Naive thymus-derived CD4-positive, alpha-beta T cell (primary cell): ENCODE measurements at regions of chr3 and their contacts with region 1.

Region 1: GRCh38 chr3:56702490-56703315 is 19.6 kb upstream of the TASOR start:
- DNase-seq: peak in 7 of 9 donors; percentile 52 to 75 (median 67)
- ATAC-seq: peak; percentile 86
- H3K4me3 ChIP-seq: no peak overlapping the region
- H3K4me3 Mint-ChIP-seq: no peak overlapping the region
- H3K27ac ChIP-seq: no peak overlapping the region
- H3K27ac Mint-ChIP-seq: peak overlapping the region in 2 of 9 donors; percentile 1 to 22
- H3K4me1 ChIP-seq: peaks cover 3 to 11% of the 10 kb centered on the region in 2 donors
- H3K4me1 Mint-ChIP-seq: peaks cover 15 to 35% (median 24%) of the 10 kb centered on the region in 7 donors
- H3K27me3 ChIP-seq: no peaks in the 10 kb centered on the region
- H3K27me3 Mint-ChIP-seq: no peaks in the 10 kb centered on the region

Region 2: DNA sequence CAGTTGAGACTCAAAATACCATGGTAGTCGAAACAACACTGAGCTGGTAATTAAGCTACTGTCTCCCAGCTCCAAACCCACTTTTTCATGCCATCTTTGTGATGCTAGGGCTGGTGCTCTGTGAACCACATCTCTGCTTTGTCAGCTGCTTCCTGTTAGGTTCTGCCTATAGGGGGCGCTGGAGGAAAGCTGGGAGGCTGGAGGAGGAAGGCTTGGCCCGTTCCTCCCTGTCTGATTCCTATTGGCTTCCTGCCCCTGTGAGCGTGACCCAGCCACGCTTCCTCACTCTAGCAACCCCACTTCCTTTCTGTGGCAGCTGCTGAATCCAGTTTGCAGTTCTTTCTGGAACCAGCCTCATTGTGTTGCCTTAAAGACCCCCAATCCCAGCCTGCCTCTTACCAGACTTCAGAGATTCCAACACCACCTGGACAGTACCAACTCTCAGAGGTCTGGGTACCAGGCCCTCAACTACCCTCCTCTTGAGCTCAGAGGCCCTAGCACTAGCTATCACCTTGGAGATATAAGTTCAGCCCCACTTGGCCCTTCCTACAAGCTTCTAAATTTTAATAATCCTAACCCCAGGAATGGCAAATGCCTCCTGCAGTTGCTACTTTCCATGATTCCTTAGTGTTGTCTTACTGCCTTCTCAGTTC is 355.4 kb before region 1 on chr3:
- CTCF ChIA-PET with region 1: no interaction called
- POLR2A ChIA-PET with region 1: no interaction called
- intact Hi-C with region 1: loop called in 1 of 2 experiments (anchors 10 kb)
- DNase-seq: peak in 1 of 9 donors; percentile 26
- ATAC-seq: no peak
- H3K4me3 ChIP-seq: no peak overlapping the region
- H3K4me3 Mint-ChIP-seq: no peak overlapping the region
- H3K27ac ChIP-seq: no peak overlapping the region
- H3K27ac Mint-ChIP-seq: no peak overlapping the region
- H3K4me1 ChIP-seq: no peaks in the 10 kb centered on the region
- H3K4me1 Mint-ChIP-seq: peaks cover 0 to 4% (median 0%) of the 10 kb centered on the region in 7 donors
- H3K27me3 ChIP-seq: no peaks in the 10 kb centered on the region
- H3K27me3 Mint-ChIP-seq: peaks cover 0 to 18% (median 8%) of the 10 kb centered on the region in 5 donors

Region 3: GRCh38 chr3:56725175-56725574 is 22.5 kb after region 1 on chr3:
- CTCF ChIA-PET with region 1: interaction called, 5 read pairs
- POLR2A ChIA-PET with region 1: interaction called, 5 read pairs
- intact Hi-C with region 1: loop called in 1 of 2 experiments (anchors 2 kb)
- DNase-seq: peak in 7 of 9 donors; percentile 27 to 61 (median 44)
- ATAC-seq: peak; percentile 88
- H3K4me3 ChIP-seq: no peak overlapping the region
- H3K4me3 Mint-ChIP-seq: peak overlapping the region; percentile 55 to 87 (median 72)
- H3K27ac ChIP-seq: peak overlapping the region; percentile 51
- H3K27ac Mint-ChIP-seq: peak overlapping the region; percentile 63 to 98 (median 90)
- H3K4me1 ChIP-seq: peaks cover 20 to 31% of the 10 kb centered on the region in 2 donors
- H3K4me1 Mint-ChIP-seq: peaks cover 12 to 70% (median 51%) of the 10 kb centered on the region in 7 donors
- H3K27me3 ChIP-seq: no peaks in the 10 kb centered on the region
- H3K27me3 Mint-ChIP-seq: no peaks in the 10 kb centered on the region

Region 4: GRCh38 chr3:56783644-56784447 is 81.1 kb after region 1 on chr3:
- CTCF ChIA-PET with region 1: interaction called, 5 read pairs
- POLR2A ChIA-PET with region 1: interaction called, 10 read pairs
- intact Hi-C with region 1: no loop called
- DNase-seq: peak in 8 of 9 donors; percentile 63 to 86 (median 78)
- ATAC-seq: peak; percentile 95
- H3K4me3 ChIP-seq: peak overlapping the region; percentile 31
- H3K4me3 Mint-ChIP-seq: peak overlapping the region; percentile 38 to 85 (median 78)
- H3K27ac ChIP-seq: peak overlapping the region; percentile 63
- H3K27ac Mint-ChIP-seq: peak overlapping the region; percentile 76 to 98 (median 96)
- H3K4me1 ChIP-seq: peaks cover 94 to 96% of the 10 kb centered on the region in 2 donors
- H3K4me1 Mint-ChIP-seq: peaks cover 76 to 100% (median 98%) of the 10 kb centered on the region in 7 donors
- H3K27me3 ChIP-seq: no peaks in the 10 kb centered on the region
- H3K27me3 Mint-ChIP-seq: peaks cover 0 to 2% (median 0%) of the 10 kb centered on the region in 5 donors

Region 5: DNA sequence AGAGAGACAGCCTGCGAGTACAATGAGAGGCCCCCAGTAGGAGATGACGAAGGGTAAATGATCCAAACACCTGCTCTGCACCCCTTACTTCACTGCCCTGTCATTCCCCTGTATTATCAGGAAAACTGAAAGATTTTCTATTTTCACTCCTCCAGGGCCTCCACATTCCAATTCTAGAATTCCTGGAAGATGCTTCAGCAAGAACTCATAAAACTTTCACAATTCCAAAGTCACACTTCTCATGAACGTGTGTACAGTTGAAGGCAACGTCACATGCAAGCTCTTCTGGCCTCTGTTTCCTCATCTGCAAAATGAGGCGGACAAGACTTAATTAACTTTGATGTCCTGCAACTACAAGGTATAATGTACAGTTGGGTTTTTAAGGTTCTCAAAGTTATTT is 295.0 kb after region 1 on chr3:
- CTCF ChIA-PET with region 1: interaction called, 13 read pairs
- POLR2A ChIA-PET with region 1: interaction called, 4 read pairs
- intact Hi-C with region 1: no loop called
- DNase-seq: no peak
- ATAC-seq: no peak
- H3K4me3 ChIP-seq: no peak overlapping the region
- H3K4me3 Mint-ChIP-seq: no peak overlapping the region
- H3K27ac ChIP-seq: no peak overlapping the region
- H3K27ac Mint-ChIP-seq: no peak overlapping the region
- H3K4me1 ChIP-seq: no peaks in the 10 kb centered on the region
- H3K4me1 Mint-ChIP-seq: peaks cover 0 to 10% (median 5%) of the 10 kb centered on the region in 7 donors
- H3K27me3 ChIP-seq: no peaks in the 10 kb centered on the region
- H3K27me3 Mint-ChIP-seq: peaks cover 0 to 15% (median 0%) of the 10 kb centered on the region in 5 donors

Region 6: DNA sequence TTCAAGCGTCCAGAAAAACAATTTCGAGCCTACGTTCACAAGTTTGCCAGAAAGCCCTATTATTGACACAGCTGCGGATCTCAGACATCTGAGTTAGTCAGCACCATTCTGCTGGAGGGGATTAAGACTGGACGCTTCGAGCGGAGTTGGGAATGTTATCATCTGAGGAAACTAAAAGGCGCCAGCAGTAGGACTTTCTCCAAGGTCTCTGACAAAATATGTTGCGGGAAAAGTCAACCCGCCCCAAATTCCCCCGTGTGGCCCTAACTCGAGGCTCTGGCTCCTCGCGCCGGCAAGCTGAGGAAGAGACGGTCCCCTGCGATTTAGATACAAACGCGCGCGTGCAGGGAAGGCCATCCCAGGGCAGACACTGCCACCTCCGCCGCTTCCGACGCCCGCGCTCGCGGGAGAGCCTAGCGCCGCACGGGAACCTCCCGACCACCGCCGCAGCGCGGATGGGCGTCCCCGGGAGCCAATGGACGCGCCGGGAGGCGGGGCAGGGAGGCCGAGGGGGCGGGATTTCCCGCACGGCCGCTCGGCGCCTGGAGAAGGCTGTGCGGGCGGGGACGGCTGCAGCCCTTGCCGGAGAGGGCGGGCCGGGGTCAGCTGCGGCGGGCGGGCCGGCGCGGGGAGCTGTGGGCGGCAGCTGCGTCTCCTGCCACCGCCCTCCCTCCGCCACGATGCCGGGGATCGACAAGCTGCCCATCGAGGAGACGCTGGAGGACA is 524.7 kb after region 1 on chr3 and contains the start of gene APPL1:
- CTCF ChIA-PET with region 1: no interaction called
- POLR2A ChIA-PET with region 1: no interaction called
- intact Hi-C with region 1: loop called (anchors 5 kb)
- DNase-seq: peak; percentile 76 to 97 (median 82)
- ATAC-seq: peak; percentile 96
- H3K4me3 ChIP-seq: peak within 1 kb of the TSS; percentile 88
- H3K4me3 Mint-ChIP-seq: peak within 1 kb of the TSS; percentile 89 to 95 (median 93)
- H3K27ac ChIP-seq: peak within 1 kb of the TSS; percentile 71
- H3K27ac Mint-ChIP-seq: peak within 1 kb of the TSS; percentile 72 to 90 (median 86)
- H3K4me1 ChIP-seq: peaks cover 9 to 12% of the 10 kb centered on the region in 2 donors
- H3K4me1 Mint-ChIP-seq: peaks cover 17 to 38% (median 29%) of the 10 kb centered on the region in 7 donors
- H3K27me3 ChIP-seq: no peaks in the 10 kb centered on the region
- H3K27me3 Mint-ChIP-seq: peaks cover 0 to 5% (median 0%) of the 10 kb centered on the region in 5 donors
- total RNA-seq, gene APPL1: 25.4 to 42.1 (median 29.2) TPM

Region 7: GRCh38 chr3:58082047-58082446 is 1379.3 kb after region 1 on chr3:
- CTCF ChIA-PET with region 1: no interaction called
- POLR2A ChIA-PET with region 1: no interaction called
- intact Hi-C with region 1: no loop called
- DNase-seq: peak in 8 of 9 donors; percentile 27 to 82 (median 69)
- ATAC-seq: peak; percentile 79
- H3K4me3 ChIP-seq: no peak overlapping the region
- H3K4me3 Mint-ChIP-seq: peak overlapping the region; percentile 46 to 83 (median 76)
- H3K27ac ChIP-seq: peak overlapping the region; percentile 38
- H3K27ac Mint-ChIP-seq: peak overlapping the region; percentile 85 to 97 (median 94)
- H3K4me1 ChIP-seq: peaks cover 0 to 54% of the 10 kb centered on the region in 2 donors
- H3K4me1 Mint-ChIP-seq: peaks cover 35 to 71% (median 56%) of the 10 kb centered on the region in 7 donors
- H3K27me3 ChIP-seq: no peaks in the 10 kb centered on the region
- H3K27me3 Mint-ChIP-seq: no peaks in the 10 kb centered on the region